ENCODE measurements at regions of chr12 and their contacts with region 1.

Region 1: GRCh38 chr12:91180582-91181395 is 1.8 kb downstream of the DCN start:
- DNase-seq: no peak
- ATAC-seq: peak; percentile 80

Region 2: GRCh38 chr12:89470741-89471509 is 1709.9 kb before region 1 on chr12:
- intact Hi-C with region 1: no loop called
- DNase-seq: no peak
- ATAC-seq: peak; percentile 71

Region 3: GRCh38 chr12:91326058-91327027 is 145.6 kb after region 1 on chr12:
- intact Hi-C with region 1: loop called (anchors 10 kb)
- DNase-seq: no peak
- ATAC-seq: peak; percentile 79

Measured in sciatic nerve (tissue), 2 donors.